ENCODE measurements at regions of chr5 and their contacts with region 1.

Region 1: GRCh38 chr5:135834639-135835529 is at the start of gene SLC25A48:
- DNase-seq: peak; percentile 75 to 88
- H3K4me3 ChIP-seq: peak within 1 kb of the TSS; percentile 46 to 84 (median 72)
- H3K27ac ChIP-seq: no peak within 1 kb of the TSS
- H3K4me1 ChIP-seq: peaks cover 0 to 5% (median 1%) of the 10 kb centered on the region in 4 experiments; a peak in 2 of 7 replicates
- H3K27me3 ChIP-seq: peaks cover 8 to 44% (median 32%) of the 10 kb centered on the region in 4 experiments
- CTCF ChIP-seq: peak in 2 of 3 experiments; percentile 10 to 76; a peak in 2 of 4 replicates
- EP300 ChIP-seq: no peak
- POLR2A ChIP-seq: no peak
- RAD21 ChIP-seq: peak; percentile 23 to 43; a peak in 2 of 4 replicates
- total RNA-seq, gene SLC25A48: 1.8 TPM in 2 replicates

Region 2: DNA sequence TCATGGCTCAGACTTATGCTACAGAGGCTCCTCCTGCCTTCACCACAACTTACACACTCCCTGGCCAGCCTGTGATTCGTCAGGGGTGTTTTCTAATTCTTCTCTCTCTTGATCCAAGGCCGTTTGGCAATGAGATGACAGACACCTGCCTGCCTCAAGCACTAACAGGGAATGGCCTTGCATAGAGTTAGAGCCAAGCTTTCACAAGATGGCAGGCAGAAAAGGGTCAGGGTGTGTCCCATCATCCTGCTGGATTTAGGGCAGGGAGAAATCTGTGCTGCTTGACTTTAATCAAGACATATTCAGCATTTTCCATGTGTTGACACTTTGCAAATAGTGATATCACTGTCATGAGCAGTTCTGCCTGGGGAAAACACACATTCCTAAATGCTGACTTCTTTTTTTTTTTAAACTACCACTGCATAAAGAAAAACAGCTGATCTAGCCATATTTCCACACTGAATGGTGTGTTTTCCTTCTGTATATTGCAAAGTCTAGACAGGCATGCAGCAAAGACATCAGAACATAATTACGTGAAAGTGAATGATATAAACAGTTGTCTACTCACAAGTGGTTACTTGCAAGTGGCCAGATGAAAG is 95.4 kb before region 1 on chr5:
- CTCF ChIA-PET with region 1: interaction called, 14 read pairs
- POLR2A ChIA-PET with region 1: no interaction called
- DNase-seq: peak in 1 of 2 experiments; percentile 17
- H3K4me3 ChIP-seq: no peak overlapping the region
- H3K27ac ChIP-seq: no peak overlapping the region
- H3K4me1 ChIP-seq: no peaks in the 10 kb centered on the region
- H3K27me3 ChIP-seq: no peaks in the 10 kb centered on the region
- CTCF ChIP-seq: no peak
- EP300 ChIP-seq: no peak
- POLR2A ChIP-seq: no peak
- RAD21 ChIP-seq: no peak

Region 3: GRCh38 chr5:135871268-135871915 is 36.5 kb after region 1 on chr5:
- CTCF ChIA-PET with region 1: interaction called, 21 read pairs
- POLR2A ChIA-PET with region 1: no interaction called
- DNase-seq: no peak
- H3K4me3 ChIP-seq: no peak overlapping the region
- H3K27ac ChIP-seq: no peak overlapping the region
- H3K4me1 ChIP-seq: no peaks in the 10 kb centered on the region
- H3K27me3 ChIP-seq: no peaks in the 10 kb centered on the region; a peak in 1 of 7 replicates
- CTCF ChIP-seq: no peak
- EP300 ChIP-seq: no peak
- POLR2A ChIP-seq: no peak
- RAD21 ChIP-seq: no peak

Measured in H1 (cell line).